ENCODE measurements at regions of chr2 and their contacts with region 1.

Region 1: DNA sequence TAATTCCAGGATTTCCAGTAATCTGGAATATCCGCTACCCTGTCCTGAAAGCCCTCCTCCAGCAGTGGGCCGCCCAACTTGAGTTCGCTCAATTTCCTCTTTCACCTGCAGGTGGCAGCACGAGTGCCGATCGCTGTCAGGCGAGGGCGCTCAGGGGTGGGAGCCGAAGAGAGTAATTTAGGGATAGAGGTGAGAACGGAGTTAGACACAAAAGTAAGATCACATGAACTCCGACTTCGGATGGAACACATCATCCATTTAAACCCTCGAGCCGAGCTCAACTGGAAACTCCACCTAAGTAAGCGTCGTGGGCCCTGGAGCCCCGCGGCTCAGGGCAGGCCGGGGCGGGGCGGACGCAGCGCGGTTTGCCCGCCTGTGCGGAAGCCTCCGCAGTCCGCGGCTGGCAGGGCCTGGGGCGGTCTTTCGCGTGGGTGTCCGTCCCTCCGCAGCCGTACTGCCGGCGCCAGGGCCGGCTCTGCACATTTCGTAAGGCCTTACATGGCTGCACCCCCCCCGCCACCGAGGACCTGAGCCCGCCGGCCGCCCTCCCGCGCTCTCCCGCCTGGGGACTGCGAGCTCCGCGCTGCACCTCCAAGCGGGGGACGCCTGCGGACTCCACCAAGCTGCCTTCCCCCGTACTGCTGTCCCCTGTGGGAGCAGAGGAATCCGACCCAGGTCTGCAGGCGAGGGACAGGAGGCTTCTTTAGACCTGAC is 61.2 kb downstream of the SEMA4F start:
- H3K4me3 ChIP-seq: peak overlapping the region; percentile 48
- H3K27ac ChIP-seq: peak overlapping the region; percentile 0; the same call in 1 of the 2 replicates
- H3K4me1 ChIP-seq: no peaks in the 10 kb centered on the region
- CTCF ChIP-seq: peak; percentile 95

Region 2: GRCh38 chr2:74703373-74703772 is 11.9 kb before region 1 on chr2:
- CTCF ChIA-PET with region 1: interaction called, 21 read pairs
- POLR2A ChIA-PET with region 1: interaction called, 7 read pairs
- H3K4me3 ChIP-seq: no peak overlapping the region
- H3K27ac ChIP-seq: no peak overlapping the region
- H3K4me1 ChIP-seq: no peaks in the 10 kb centered on the region
- CTCF ChIP-seq: no peak

Region 3: GRCh38 chr2:74833418-74834233 is 118.4 kb after region 1 on chr2 and contains the start of gene HK2:
- CTCF ChIA-PET with region 1: interaction called, 26 read pairs
- POLR2A ChIA-PET with region 1: interaction called, 3 read pairs
- H3K4me3 ChIP-seq: peak within 1 kb of the TSS; percentile 55
- H3K27ac ChIP-seq: peak within 1 kb of the TSS; percentile 71; the same call in 1 of the 2 replicates
- H3K4me1 ChIP-seq: no peaks in the 10 kb centered on the region
- CTCF ChIP-seq: no peak

Region 4: GRCh38 chr2:74876081-74876886 is 161.0 kb after region 1 on chr2:
- CTCF ChIA-PET with region 1: interaction called, 57 read pairs
- POLR2A ChIA-PET with region 1: no interaction called
- H3K4me3 ChIP-seq: no peak overlapping the region
- H3K27ac ChIP-seq: no peak overlapping the region
- H3K4me1 ChIP-seq: no peaks in the 10 kb centered on the region
- CTCF ChIP-seq: peak; percentile 50; the same call in 1 of the 2 replicates

Region 5: DNA sequence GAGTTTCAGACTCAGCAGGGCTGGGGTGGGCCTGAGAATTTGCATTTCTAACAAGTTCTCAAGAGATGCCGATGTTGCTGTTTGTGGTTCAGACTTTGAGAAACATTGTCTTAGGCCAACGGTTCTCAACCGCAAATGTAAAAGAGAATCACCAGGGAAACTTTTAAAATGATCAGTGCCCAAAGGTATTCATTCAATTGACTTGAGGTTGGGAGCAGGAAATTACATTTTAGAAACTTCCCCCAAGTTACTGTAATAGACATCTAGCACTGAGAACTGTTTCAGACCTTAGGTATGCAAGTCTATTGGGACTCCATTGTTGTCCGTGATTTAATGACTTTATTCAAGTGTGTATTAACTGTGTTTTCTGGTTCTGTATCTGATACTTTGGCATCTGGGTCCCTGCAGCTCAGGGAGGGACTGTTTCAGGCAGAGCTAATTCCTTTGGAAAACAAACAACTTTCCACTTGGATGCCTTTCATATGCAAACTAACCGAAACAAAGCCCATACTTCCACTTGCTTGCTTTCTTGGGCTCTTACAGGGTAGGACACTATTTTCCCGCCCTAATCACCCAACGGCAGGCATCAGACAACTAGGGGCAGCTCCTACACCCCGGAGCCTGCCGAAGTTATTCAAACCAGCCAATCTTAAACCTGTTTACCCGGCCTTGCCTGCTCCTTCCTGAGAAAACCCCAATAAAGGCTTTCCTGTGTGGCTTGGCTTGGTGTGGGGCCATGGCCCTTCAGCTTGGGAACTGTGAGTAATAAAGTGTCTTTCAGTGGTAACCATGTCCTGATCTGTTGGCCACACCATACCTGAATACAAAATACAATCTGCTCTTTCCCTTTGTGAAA is 340.8 kb after region 1 on chr2:
- CTCF ChIA-PET with region 1: no interaction called
- POLR2A ChIA-PET with region 1: no interaction called
- H3K4me3 ChIP-seq: no peak overlapping the region
- H3K27ac ChIP-seq: no peak overlapping the region
- H3K4me1 ChIP-seq: no peaks in the 10 kb centered on the region; the same call in 1 of the 2 replicates
- CTCF ChIP-seq: no peak